ENCODE measurements at regions of chr14 and their contacts with region 1.

Region 1: GRCh38 chr14:93137864-93138263 is 22.1 kb upstream of the ITPK1 start:
- DNase-seq: peak; percentile 13
- H3K4me3 ChIP-seq: no peak overlapping the region
- H3K27ac ChIP-seq: no peak overlapping the region
- H3K4me1 ChIP-seq: peaks cover 6% of the 10 kb centered on the region
- H3K27me3 ChIP-seq: no peaks in the 10 kb centered on the region
- CTCF ChIP-seq: no peak

Region 2: DNA sequence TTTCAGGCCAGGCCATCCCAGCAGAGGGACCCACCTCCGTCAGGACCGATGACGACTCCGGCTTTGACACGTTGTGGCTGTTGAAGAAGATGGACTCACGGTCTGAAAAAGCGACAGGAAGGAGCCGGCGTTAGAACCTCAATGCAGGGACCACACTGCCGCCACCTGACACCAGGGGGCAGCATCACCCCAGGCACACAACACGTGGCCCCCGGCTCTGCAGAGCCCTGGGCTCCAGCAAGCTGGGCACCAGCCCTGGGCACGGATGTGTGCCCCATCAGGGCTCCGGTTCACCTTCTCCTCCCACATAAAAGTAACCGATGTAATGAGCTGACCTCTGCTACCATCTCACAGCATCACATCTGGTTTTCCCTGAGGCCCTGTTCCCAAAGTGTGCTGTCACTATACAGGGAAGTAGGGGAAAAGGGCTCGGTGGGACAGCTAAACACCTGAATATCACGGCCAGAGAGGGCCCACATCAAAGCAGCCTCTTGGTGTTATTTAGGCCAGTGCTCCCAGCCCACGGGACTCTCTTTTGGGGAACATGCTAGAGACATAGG is 185.9 kb before region 1 on chr14:
- CTCF ChIA-PET with region 1: interaction called, 6 read pairs
- dilution Hi-C with region 1: no loop called
- in situ Hi-C with region 1: loop called in 1 of 2 experiments (anchors 10 kb)
- intact Hi-C with region 1: loop called (anchors 1 kb)
- DNase-seq: peak; percentile 40
- H3K4me3 ChIP-seq: no peak overlapping the region
- H3K27ac ChIP-seq: no peak overlapping the region
- H3K4me1 ChIP-seq: no peaks in the 10 kb centered on the region
- H3K27me3 ChIP-seq: no peaks in the 10 kb centered on the region
- CTCF ChIP-seq: peak; percentile 85 to 92

Region 3: GRCh38 chr14:92973261-92973797 is 164.5 kb before region 1 on chr14:
- CTCF ChIA-PET with region 1: no interaction called
- dilution Hi-C with region 1: no loop called
- in situ Hi-C with region 1: no loop called
- intact Hi-C with region 1: loop called (anchors 5 kb)
- DNase-seq: peak; percentile 29
- H3K4me3 ChIP-seq: no peak overlapping the region
- H3K27ac ChIP-seq: no peak overlapping the region
- H3K4me1 ChIP-seq: peaks cover 11% of the 10 kb centered on the region
- H3K27me3 ChIP-seq: no peaks in the 10 kb centered on the region
- CTCF ChIP-seq: peak; percentile 87 to 89

Region 4: GRCh38 chr14:93231129-93231979 is 93.5 kb after region 1 on chr14:
- CTCF ChIA-PET with region 1: no interaction called
- dilution Hi-C with region 1: no loop called
- in situ Hi-C with region 1: no loop called
- intact Hi-C with region 1: no loop called
- DNase-seq: peak; percentile 58
- H3K4me3 ChIP-seq: no peak overlapping the region
- H3K27ac ChIP-seq: no peak overlapping the region
- H3K4me1 ChIP-seq: peaks cover 3% of the 10 kb centered on the region
- H3K27me3 ChIP-seq: no peaks in the 10 kb centered on the region
- CTCF ChIP-seq: no peak

Region 5: GRCh38 chr14:93914278-93914677 is 776.4 kb after region 1 on chr14:
- CTCF ChIA-PET with region 1: no interaction called
- dilution Hi-C with region 1: no loop called
- in situ Hi-C with region 1: no loop called
- intact Hi-C with region 1: no loop called
- DNase-seq: no peak
- H3K4me3 ChIP-seq: no peak overlapping the region
- H3K27ac ChIP-seq: no peak overlapping the region
- H3K4me1 ChIP-seq: no peaks in the 10 kb centered on the region
- H3K27me3 ChIP-seq: no peaks in the 10 kb centered on the region
- CTCF ChIP-seq: no peak

Measured in mammary epithelial cell (primary cell).